K562 (cell line): ENCODE measurements at regions of chr16 and their contacts with region 1.

Region 1: GRCh38 chr16:31873556-31874365 is at the start of gene ZNF267:
- DNase-seq: peak; percentile 95 to 98 (median 98)
- ATAC-seq: peak; percentile 93
- H3K4me3 ChIP-seq: peak within 1 kb of the TSS; percentile 98
- H3K27ac ChIP-seq: peak within 1 kb of the TSS; percentile 98
- H3K4me1 ChIP-seq: peaks cover 10 to 37% of the 10 kb centered on the region in 2 experiments
- H3K27me3 ChIP-seq: no peaks in the 10 kb centered on the region
- CTCF ChIP-seq: no peak
- EP300 ChIP-seq: no peak
- POLR2A ChIP-seq: peak; percentile 96
- RAD21 ChIP-seq: no peak
- polyA plus RNA-seq, gene ZNF267: 18.1 to 22.2 TPM

Region 2: DNA sequence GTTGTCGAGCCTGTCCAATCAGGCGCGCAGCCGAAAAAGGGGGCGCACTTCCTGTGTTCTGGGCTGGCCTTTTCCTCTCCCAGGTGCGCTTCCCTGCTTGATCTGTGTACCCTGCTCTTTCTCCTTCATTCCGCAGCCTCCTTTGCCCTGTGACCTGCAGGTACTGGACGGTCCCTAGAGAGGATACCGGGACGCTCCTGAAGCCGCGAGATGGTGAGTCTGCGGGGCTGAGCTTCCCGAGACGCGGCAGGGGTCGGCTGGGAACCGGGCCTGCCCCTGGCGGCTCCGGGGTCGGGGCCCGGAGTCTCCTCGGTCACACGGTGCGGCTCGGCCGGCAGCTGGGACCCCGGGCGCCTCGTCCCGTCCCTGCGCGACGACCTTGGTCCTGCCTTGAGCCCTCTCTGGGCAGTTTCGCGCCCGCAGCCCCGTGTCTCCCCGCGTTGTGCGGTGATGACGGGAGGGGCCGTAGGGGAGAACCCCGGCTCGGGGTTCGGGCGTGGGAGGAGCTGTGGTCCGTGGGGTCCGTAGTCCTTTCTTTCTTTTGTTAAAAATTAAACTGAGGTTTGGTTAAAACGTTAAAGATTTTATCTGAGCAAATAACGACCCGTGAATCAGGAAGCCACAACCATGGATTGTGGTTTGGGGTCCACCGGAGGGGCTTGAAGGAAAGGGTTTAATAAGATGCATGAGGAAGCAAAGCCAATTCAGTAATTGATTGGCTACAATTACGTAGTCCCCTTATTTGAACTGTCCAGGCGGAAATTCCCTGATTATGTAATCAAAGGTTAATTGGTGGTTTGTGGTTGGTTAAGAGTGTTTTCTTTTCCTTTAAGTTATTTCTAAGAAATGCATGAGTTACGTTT is 173.0 kb before region 1 on chr16:
- CTCF ChIA-PET with region 1: no interaction called
- POLR2A ChIA-PET with region 1: no interaction called
- in situ Hi-C with region 1: no loop called
- intact Hi-C with region 1: loop called (anchors 5 kb)
- DNase-seq: peak in 3 of 4 experiments; percentile 39 to 93 (median 56)
- ATAC-seq: peak; percentile 71
- H3K4me3 ChIP-seq: peak overlapping the region; percentile 84
- H3K27ac ChIP-seq: peak overlapping the region; percentile 66
- H3K4me1 ChIP-seq: peaks cover 5 to 8% of the 10 kb centered on the region in 2 experiments; a peak in 3 of 5 replicates
- H3K27me3 ChIP-seq: no peaks in the 10 kb centered on the region
- CTCF ChIP-seq: 0 out of 6 replicates have a peak, but pooled peaks of 1 of the 3 experiments have one; percentile 19
- EP300 ChIP-seq: no peak
- POLR2A ChIP-seq: peak; percentile 79
- RAD21 ChIP-seq: no peak

Region 3: GRCh38 chr16:31888735-31889134 is 15.0 kb after region 1 on chr16:
- CTCF ChIA-PET with region 1: no interaction called
- POLR2A ChIA-PET with region 1: no interaction called
- in situ Hi-C with region 1: no loop called
- intact Hi-C with region 1: no loop called
- DNase-seq: no peak
- ATAC-seq: no peak
- H3K4me3 ChIP-seq: no peak overlapping the region
- H3K27ac ChIP-seq: no peak overlapping the region
- H3K4me1 ChIP-seq: no peaks in the 10 kb centered on the region
- H3K27me3 ChIP-seq: no peaks in the 10 kb centered on the region
- CTCF ChIP-seq: no peak
- EP300 ChIP-seq: no peak
- POLR2A ChIP-seq: no peak
- RAD21 ChIP-seq: no peak